MCF 10A (cell line): ENCODE measurements at regions of chr1 and their contacts with region 1.

Region 1: DNA sequence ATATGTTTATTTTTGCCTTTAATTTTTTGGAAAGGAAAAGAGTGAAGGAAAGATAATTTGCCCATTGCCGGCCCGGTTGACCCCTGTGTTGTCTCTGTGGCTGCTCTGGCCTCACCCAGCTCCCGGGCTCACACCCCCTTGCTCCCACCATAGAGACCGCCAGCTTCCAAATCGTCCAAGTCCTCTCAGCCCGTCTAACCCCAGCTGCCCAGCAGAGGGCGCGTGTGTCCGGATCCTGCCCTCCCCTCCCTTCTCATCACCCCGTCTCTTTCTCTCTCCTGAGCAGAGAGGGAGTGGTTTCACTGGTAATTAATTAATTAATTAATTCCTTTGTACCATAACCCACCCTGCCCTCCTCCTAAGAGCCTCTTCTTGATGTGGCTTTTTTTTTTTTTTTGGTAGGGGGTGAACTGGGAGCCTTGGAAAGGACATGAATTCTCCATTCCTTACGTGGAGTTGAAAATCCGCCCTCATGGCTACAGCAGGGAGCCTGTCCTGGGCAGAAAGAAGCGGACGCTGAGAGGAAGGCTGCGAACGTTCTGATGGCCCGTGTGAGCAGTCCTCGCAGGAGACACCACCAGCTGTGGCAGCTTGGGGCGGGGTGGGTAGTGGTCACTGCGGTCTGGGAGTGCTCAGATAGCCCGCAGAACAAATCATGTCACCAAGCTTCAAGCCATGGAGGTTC is 45.9 kb downstream of the KIAA0040 start:
- DNase-seq: peak; percentile 74
- H3K4me3 Mint-ChIP-seq: no peak overlapping the region
- H3K27ac Mint-ChIP-seq: no peak overlapping the region
- H3K4me1 Mint-ChIP-seq: peaks cover 12% of the 10 kb centered on the region
- H3K27me3 Mint-ChIP-seq: peaks cover 15% of the 10 kb centered on the region
- CTCF ChIP-seq: peak; percentile 88

Region 2: DNA sequence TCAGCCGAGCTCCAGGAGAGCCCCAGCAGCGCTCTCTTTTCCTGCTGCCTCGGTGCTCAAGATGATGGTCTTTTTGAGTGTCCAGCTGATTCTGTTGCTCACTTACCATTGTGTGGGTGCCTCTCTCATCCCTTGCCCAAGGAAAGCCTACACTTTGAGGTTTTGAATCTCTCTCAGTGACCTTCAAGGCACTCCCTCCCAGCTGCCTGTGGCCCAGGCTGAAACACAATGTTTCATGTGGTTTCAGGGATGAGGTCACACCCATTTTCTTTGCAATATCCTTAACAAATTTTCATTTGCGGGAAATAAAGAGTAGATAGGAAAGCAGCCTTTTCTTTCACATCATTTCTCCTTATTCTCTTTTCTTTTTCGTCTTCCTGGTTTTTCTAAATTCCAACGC is 110.8 kb before region 1 on chr1:
- CTCF ChIA-PET with region 1: interaction called, 279 read pairs
- POLR2A ChIA-PET with region 1: no interaction called
- intact Hi-C with region 1: no loop called
- DNase-seq: no peak
- H3K4me3 Mint-ChIP-seq: no peak overlapping the region
- H3K27ac Mint-ChIP-seq: no peak overlapping the region
- H3K4me1 Mint-ChIP-seq: peaks cover 10% of the 10 kb centered on the region
- H3K27me3 Mint-ChIP-seq: no peaks in the 10 kb centered on the region
- CTCF ChIP-seq: no peak

Region 3: DNA sequence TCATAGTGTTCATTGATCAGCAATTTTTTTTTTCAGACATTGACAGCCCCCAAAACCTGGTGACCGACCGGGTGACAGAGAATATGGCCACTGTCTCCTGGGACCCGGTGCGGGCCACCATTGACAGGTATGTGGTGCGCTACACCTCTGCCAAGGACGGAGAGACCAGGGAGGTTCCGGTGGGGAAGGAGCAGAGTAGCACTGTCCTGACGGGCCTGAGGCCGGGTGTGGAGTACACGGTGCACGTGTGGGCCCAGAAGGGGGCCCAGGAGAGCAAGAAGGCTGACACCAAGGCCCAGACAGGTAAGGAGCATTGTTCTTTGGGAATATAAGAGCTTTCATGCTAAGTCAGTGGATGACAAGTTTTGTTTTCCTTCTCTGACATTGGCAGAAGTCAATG is 29.8 kb before region 1 on chr1:
- CTCF ChIA-PET with region 1: interaction called, 27 read pairs
- POLR2A ChIA-PET with region 1: no interaction called
- intact Hi-C with region 1: no loop called
- DNase-seq: no peak
- H3K4me3 Mint-ChIP-seq: no peak overlapping the region
- H3K27ac Mint-ChIP-seq: no peak overlapping the region
- H3K4me1 Mint-ChIP-seq: no peaks in the 10 kb centered on the region
- H3K27me3 Mint-ChIP-seq: no peaks in the 10 kb centered on the region
- CTCF ChIP-seq: no peak

Region 4: GRCh38 chr1:175129997-175130648 is 16.5 kb before region 1 on chr1:
- CTCF ChIA-PET with region 1: interaction called, 99 read pairs
- POLR2A ChIA-PET with region 1: no interaction called
- intact Hi-C with region 1: no loop called
- DNase-seq: no peak
- H3K4me3 Mint-ChIP-seq: no peak overlapping the region
- H3K27ac Mint-ChIP-seq: no peak overlapping the region
- H3K4me1 Mint-ChIP-seq: peaks cover 14% of the 10 kb centered on the region
- H3K27me3 Mint-ChIP-seq: no peaks in the 10 kb centered on the region
- CTCF ChIP-seq: no peak

Region 5: DNA sequence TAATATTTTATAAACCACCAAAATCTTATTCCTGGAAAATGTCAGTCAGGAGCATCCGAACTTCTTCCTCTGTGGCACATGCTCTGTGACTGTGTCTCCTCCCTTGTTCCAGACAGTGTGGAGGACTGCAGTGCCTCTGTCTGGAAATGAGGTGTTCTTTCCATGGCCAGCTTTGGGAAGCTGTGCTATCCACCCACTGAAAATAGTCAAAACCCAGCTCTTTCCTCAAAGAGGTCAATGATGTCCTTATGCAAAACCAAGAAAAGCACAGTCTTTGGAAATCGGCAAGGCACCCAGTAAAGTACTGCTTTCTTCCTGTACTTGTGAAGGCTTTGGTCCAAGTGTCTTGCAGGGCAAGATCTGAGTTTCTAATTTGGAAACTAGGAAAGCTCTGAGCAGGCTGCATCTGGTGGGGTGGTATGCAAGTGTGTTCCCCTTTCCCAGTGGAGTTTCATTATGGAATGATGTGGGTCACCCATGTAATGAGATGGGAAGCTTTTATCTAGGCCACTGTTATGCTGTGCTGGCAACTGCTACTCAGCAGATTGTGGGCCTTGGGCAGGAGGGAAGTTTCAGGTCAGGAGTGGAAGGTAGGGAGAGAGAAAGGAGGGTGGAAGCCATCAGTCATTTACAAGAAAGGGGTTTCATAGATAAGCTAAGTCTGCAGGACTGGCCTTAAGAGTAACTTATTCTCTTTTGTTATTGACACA is 39.9 kb after region 1 on chr1:
- CTCF ChIA-PET with region 1: interaction called, 78 read pairs
- POLR2A ChIA-PET with region 1: interaction called, 3 read pairs
- intact Hi-C with region 1: no loop called
- DNase-seq: no peak
- H3K4me3 Mint-ChIP-seq: no peak overlapping the region
- H3K27ac Mint-ChIP-seq: no peak overlapping the region
- H3K4me1 Mint-ChIP-seq: peaks cover 26% of the 10 kb centered on the region
- H3K27me3 Mint-ChIP-seq: no peaks in the 10 kb centered on the region
- CTCF ChIP-seq: no peak

Region 6: DNA sequence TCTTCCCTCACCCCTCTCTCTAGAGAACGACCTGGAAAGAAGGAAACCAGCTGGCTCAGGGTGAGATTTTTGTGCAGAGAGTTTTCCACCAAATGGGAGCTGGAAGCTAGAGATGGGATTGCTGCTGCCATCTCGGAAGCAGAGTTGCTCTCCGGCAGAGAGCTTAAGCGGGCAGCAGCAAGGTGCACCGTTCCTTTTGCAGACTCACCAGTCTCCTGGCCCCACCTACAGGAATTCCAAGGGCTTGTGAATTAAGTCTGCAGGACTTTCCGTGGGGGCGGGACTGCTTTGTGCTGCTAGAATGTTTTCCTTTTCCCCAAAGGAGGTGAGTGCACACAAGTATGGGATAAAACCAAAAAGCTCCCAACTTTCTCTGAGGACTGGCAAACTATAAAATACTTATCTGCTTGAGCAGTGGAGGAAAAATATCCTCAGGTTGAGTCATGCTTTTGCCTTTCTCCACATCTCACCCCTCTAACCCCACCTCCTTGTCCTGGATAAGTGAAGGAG is 75.0 kb after region 1 on chr1:
- CTCF ChIA-PET with region 1: interaction called, 179 read pairs
- POLR2A ChIA-PET with region 1: no interaction called
- intact Hi-C with region 1: no loop called
- DNase-seq: peak; percentile 91
- H3K4me3 Mint-ChIP-seq: no peak overlapping the region
- H3K27ac Mint-ChIP-seq: no peak overlapping the region
- H3K4me1 Mint-ChIP-seq: peaks cover 27% of the 10 kb centered on the region
- H3K27me3 Mint-ChIP-seq: no peaks in the 10 kb centered on the region
- CTCF ChIP-seq: peak; percentile 45

Region 7: GRCh38 chr1:175331891-175332290 is 185.2 kb after region 1 on chr1:
- CTCF ChIA-PET with region 1: interaction called, 723 read pairs
- POLR2A ChIA-PET with region 1: no interaction called
- intact Hi-C with region 1: no loop called
- DNase-seq: no peak
- H3K4me3 Mint-ChIP-seq: no peak overlapping the region
- H3K27ac Mint-ChIP-seq: no peak overlapping the region
- H3K4me1 Mint-ChIP-seq: no peaks in the 10 kb centered on the region
- H3K27me3 Mint-ChIP-seq: peaks cover 34% of the 10 kb centered on the region
- CTCF ChIP-seq: no peak